ENCODE measurements at regions of chr1 and their contacts with region 1.

Region 1: GRCh38 chr1:80542231-80542630 is 1258.5 kb upstream of the ADGRL2 start:
- DNase-seq: no peak
- H3K4me3 ChIP-seq: no peak overlapping the region
- H3K4me3 Mint-ChIP-seq: no peak overlapping the region
- H3K27ac Mint-ChIP-seq: no peak overlapping the region
- H3K4me1 ChIP-seq: no peaks in the 10 kb centered on the region
- H3K4me1 Mint-ChIP-seq: no peaks in the 10 kb centered on the region
- H3K27me3 ChIP-seq: no peaks in the 10 kb centered on the region
- H3K27me3 Mint-ChIP-seq: no peaks in the 10 kb centered on the region
- CTCF ChIP-seq: no peak

Region 2: GRCh38 chr1:80656071-80656509 is 113.9 kb after region 1 on chr1:
- CTCF ChIA-PET with region 1: no interaction called
- POLR2A ChIA-PET with region 1: no interaction called
- intact Hi-C with region 1: loop called (anchors 5 kb)
- DNase-seq: peak; percentile 40 to 42
- H3K4me3 ChIP-seq: no peak overlapping the region
- H3K4me3 Mint-ChIP-seq: no peak overlapping the region
- H3K27ac Mint-ChIP-seq: no peak overlapping the region
- H3K4me1 ChIP-seq: no peaks in the 10 kb centered on the region
- H3K4me1 Mint-ChIP-seq: no peaks in the 10 kb centered on the region
- H3K27me3 ChIP-seq: no peaks in the 10 kb centered on the region
- H3K27me3 Mint-ChIP-seq: no peaks in the 10 kb centered on the region
- CTCF ChIP-seq: peak in 1 of 2 experiments; percentile 48

Region 3: GRCh38 chr1:80892539-80892938 is 350.3 kb after region 1 on chr1:
- CTCF ChIA-PET with region 1: no interaction called
- POLR2A ChIA-PET with region 1: no interaction called
- intact Hi-C with region 1: no loop called
- DNase-seq: no peak
- H3K4me3 ChIP-seq: no peak overlapping the region
- H3K4me3 Mint-ChIP-seq: no peak overlapping the region
- H3K27ac Mint-ChIP-seq: peak overlapping the region; percentile 71
- H3K4me1 ChIP-seq: no peaks in the 10 kb centered on the region
- H3K4me1 Mint-ChIP-seq: peaks cover 6% of the 10 kb centered on the region
- H3K27me3 ChIP-seq: no peaks in the 10 kb centered on the region
- H3K27me3 Mint-ChIP-seq: no peaks in the 10 kb centered on the region
- CTCF ChIP-seq: no peak

Measured in Caco-2 (cell line).